ENCODE measurements at regions of chr3 and their contacts with region 1.

Region 1: GRCh38 chr3:49093853-49094767 is at the start of gene QRICH1:
- DNase-seq: peak; percentile 78 to 96 (median 82)
- ATAC-seq: peak; percentile 91
- H3K4me3 ChIP-seq: peak within 1 kb of the TSS; percentile 62
- H3K27ac ChIP-seq: peak within 1 kb of the TSS; percentile 97
- H3K4me1 ChIP-seq: peaks cover 18 to 30% of the 10 kb centered on the region in 2 experiments; a peak in 4 of 5 replicates
- H3K27me3 ChIP-seq: no peaks in the 10 kb centered on the region
- CTCF ChIP-seq: peak; percentile 65 to 76 (median 72)
- EP300 ChIP-seq: 0 out of 2 replicates have a peak, but pooled peaks have one; percentile 3
- POLR2A ChIP-seq: peak; percentile 85
- RAD21 ChIP-seq: peak; percentile 10 to 51; a peak in 2 of 4 replicates
- polyA plus RNA-seq, gene QRICH1: 20.1 to 20.5 TPM

Region 2: DNA sequence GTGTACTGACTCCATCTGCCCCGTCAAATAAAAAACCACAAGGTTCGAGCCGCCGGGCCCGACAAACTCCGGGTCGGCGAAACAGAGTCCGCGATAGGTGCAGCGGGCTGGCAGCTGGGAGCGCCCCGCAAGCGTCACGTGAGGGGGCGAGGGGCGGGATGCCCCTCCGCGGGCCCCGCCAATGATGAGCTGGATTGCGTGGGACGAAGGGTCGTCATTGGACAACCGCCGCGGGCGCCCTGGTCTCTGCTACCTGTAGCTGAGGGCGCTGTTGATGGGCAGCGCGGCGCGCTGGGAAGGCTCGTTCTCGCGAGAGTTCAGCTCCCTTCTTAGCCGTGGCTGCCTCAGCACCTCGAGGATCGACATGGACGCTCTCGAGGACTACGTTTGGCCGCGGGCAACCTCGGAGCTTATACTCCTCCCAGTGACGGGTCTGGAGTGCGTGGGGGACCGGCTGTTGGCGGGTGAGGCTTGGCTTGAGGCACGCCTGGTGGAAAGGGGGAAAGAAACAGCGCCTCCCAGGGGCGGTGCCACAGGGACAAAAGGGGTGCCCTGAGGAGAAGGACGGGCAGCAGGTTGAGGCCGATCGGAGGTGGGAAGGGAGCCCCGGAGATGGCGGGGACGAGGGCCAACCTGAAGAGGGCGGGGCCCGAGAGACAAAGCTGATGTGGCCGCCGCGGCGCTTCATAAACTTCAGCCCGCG is 86.9 kb before region 1 on chr3 and contains the start of gene WDR6:
- CTCF ChIA-PET with region 1: no interaction called
- POLR2A ChIA-PET with region 1: interaction called, 10 read pairs
- in situ Hi-C with region 1: no loop called
- intact Hi-C with region 1: no loop called
- DNase-seq: peak; percentile 91 to 97 (median 94)
- ATAC-seq: peak; percentile 89
- H3K4me3 ChIP-seq: peak within 1 kb of the TSS; percentile 80
- H3K27ac ChIP-seq: peak within 1 kb of the TSS; percentile 99
- H3K4me1 ChIP-seq: peaks cover 19 to 45% of the 10 kb centered on the region in 2 experiments; a peak in 4 of 5 replicates
- H3K27me3 ChIP-seq: no peaks in the 10 kb centered on the region
- CTCF ChIP-seq: peak; percentile 39 to 55 (median 42); a peak in 5 of 6 replicates
- EP300 ChIP-seq: no peak
- POLR2A ChIP-seq: peak; percentile 94
- RAD21 ChIP-seq: peak in 1 of 2 experiments; percentile 15; a peak in 1 of 4 replicates
- polyA plus RNA-seq, gene WDR6: 8.9 to 14.2 TPM

Region 3: GRCh38 chr3:49021813-49022687 is 72.1 kb before region 1 on chr3 and contains the start of gene NDUFAF3:
- CTCF ChIA-PET with region 1: no interaction called
- POLR2A ChIA-PET with region 1: interaction called, 31 read pairs
- in situ Hi-C with region 1: no loop called
- intact Hi-C with region 1: no loop called
- DNase-seq: peak; percentile 74 to 91 (median 77)
- ATAC-seq: peak; percentile 76
- H3K4me3 ChIP-seq: peak within 1 kb of the TSS; percentile 74
- H3K27ac ChIP-seq: peak within 1 kb of the TSS; percentile 99
- H3K4me1 ChIP-seq: peaks cover 14 to 67% of the 10 kb centered on the region in 2 experiments; a peak in 4 of 5 replicates
- H3K27me3 ChIP-seq: no peaks in the 10 kb centered on the region
- CTCF ChIP-seq: peak; percentile 79 to 83 (median 82)
- EP300 ChIP-seq: no peak
- POLR2A ChIP-seq: no peak; the same call in none of the 2 replicates
- RAD21 ChIP-seq: no peak
- polyA plus RNA-seq, gene NDUFAF3: 17.0 to 36.3 TPM

Region 4: GRCh38 chr3:49028673-49029562 is 65.2 kb before region 1 on chr3 and contains the start of gene IMPDH2:
- CTCF ChIA-PET with region 1: no interaction called
- POLR2A ChIA-PET with region 1: interaction called, 19 read pairs
- in situ Hi-C with region 1: no loop called
- intact Hi-C with region 1: loop called (anchors 2 kb)
- DNase-seq: peak; percentile 78 to 95 (median 86)
- ATAC-seq: peak; percentile 86
- H3K4me3 ChIP-seq: peak within 1 kb of the TSS; percentile 74
- H3K27ac ChIP-seq: peak within 1 kb of the TSS; percentile 89
- H3K4me1 ChIP-seq: peaks cover 37 to 42% of the 10 kb centered on the region in 2 experiments; a peak in 4 of 5 replicates
- H3K27me3 ChIP-seq: no peaks in the 10 kb centered on the region
- CTCF ChIP-seq: peak in 1 of 3 experiments; percentile 28; a peak in 2 of 6 replicates
- EP300 ChIP-seq: no peak
- POLR2A ChIP-seq: peak; percentile 98
- RAD21 ChIP-seq: 0 out of 4 replicates have a peak, but pooled peaks of 1 of the 2 experiments have one; percentile 2
- polyA plus RNA-seq, gene IMPDH2: 426 to 507 TPM

Region 5: DNA sequence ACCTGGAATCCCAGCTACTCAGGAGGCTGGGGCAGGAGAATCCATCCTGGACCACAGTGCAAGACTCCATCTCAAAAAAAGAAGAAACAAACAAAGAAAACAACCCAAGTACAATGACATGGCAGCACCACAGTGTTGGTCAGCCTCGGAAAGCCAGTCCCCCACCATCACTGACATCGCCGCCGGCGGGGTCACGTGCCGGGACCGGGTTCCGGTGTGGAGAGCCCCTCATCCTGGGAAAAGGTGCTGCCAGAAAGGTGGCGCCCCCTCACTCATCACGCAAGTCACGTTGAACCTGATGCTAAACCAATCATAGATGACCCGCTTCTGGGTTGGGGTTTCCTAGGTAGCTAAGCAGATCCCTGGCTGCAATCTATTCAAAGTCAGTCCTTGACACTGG is 18.0 kb before region 1 on chr3:
- CTCF ChIA-PET with region 1: no interaction called
- POLR2A ChIA-PET with region 1: interaction called, 25 read pairs
- in situ Hi-C with region 1: no loop called
- intact Hi-C with region 1: no loop called
- DNase-seq: no peak
- ATAC-seq: no peak
- H3K4me3 ChIP-seq: no peak overlapping the region
- H3K27ac ChIP-seq: no peak overlapping the region
- H3K4me1 ChIP-seq: no peaks in the 10 kb centered on the region
- H3K27me3 ChIP-seq: no peaks in the 10 kb centered on the region
- CTCF ChIP-seq: no peak
- EP300 ChIP-seq: no peak
- POLR2A ChIP-seq: no peak
- RAD21 ChIP-seq: no peak

Region 6: GRCh38 chr3:49081429-49081828 is 12.7 kb before region 1 on chr3:
- CTCF ChIA-PET with region 1: no interaction called
- POLR2A ChIA-PET with region 1: interaction called, 25 read pairs
- in situ Hi-C with region 1: no loop called
- intact Hi-C with region 1: no loop called
- DNase-seq: no peak
- ATAC-seq: peak; percentile 29; the same call in 1 of the 3 replicates
- H3K4me3 ChIP-seq: no peak overlapping the region
- H3K27ac ChIP-seq: no peak overlapping the region
- H3K4me1 ChIP-seq: no peaks in the 10 kb centered on the region
- H3K27me3 ChIP-seq: no peaks in the 10 kb centered on the region
- CTCF ChIP-seq: no peak
- EP300 ChIP-seq: no peak
- POLR2A ChIP-seq: no peak
- RAD21 ChIP-seq: no peak

Region 7: DNA sequence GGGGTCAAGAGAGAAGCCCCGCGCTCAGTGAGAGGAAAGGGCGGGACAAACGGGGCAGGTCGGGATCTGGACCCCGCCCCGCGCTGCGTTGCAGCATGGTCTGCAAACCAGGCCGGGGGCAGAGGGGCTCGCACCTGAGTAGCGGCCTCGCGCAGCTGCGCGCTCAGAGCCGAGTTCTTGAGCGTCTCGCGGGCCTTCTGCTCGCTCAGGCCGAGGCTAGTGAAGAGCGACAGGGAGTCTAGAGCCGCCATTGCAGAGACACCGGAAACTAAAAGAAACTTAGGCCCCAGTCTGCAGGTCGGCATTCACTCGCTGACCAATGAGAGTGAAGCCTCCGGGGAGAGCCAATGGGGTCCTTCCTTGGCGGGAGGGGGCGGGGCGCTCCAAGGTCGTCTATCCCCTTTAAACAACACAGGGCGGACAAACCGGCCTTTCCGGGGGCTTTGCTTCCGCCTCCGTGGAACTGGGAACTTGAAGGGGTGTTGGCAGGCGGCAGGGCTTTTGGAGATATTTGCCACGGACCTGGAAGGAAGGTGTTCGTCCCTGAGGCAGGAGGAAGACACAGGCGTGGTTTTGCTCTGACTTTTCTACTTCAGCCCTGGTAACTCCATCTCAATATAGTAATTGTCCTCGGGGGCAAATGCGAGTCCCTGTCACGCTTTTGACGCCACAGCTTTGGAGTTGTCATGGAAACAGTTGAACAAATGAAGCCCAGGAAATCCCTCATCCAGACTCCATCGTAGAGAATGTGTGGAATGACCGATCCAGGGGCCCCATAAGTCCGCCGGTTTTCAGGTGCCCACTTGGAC is 10.6 kb after region 1 on chr3 and contains the start of gene QARS1:
- CTCF ChIA-PET with region 1: no interaction called
- POLR2A ChIA-PET with region 1: interaction called, 14 read pairs
- in situ Hi-C with region 1: no loop called
- intact Hi-C with region 1: loop called (anchors 1 kb)
- DNase-seq: peak; percentile 93 to 96 (median 94)
- ATAC-seq: peak; percentile 98
- H3K4me3 ChIP-seq: peak within 1 kb of the TSS; percentile 60
- H3K27ac ChIP-seq: peak within 1 kb of the TSS; percentile 84
- H3K4me1 ChIP-seq: peaks cover 6 to 18% of the 10 kb centered on the region in 2 experiments; a peak in 4 of 5 replicates
- H3K27me3 ChIP-seq: no peaks in the 10 kb centered on the region
- CTCF ChIP-seq: no peak
- EP300 ChIP-seq: no peak
- POLR2A ChIP-seq: peak; percentile 85
- RAD21 ChIP-seq: no peak
- polyA plus RNA-seq, gene QARS1: 230 to 310 TPM

Measured in K562 (cell line).